ENCODE measurements at regions of chr21 and their contacts with region 1.

Region 1: DNA sequence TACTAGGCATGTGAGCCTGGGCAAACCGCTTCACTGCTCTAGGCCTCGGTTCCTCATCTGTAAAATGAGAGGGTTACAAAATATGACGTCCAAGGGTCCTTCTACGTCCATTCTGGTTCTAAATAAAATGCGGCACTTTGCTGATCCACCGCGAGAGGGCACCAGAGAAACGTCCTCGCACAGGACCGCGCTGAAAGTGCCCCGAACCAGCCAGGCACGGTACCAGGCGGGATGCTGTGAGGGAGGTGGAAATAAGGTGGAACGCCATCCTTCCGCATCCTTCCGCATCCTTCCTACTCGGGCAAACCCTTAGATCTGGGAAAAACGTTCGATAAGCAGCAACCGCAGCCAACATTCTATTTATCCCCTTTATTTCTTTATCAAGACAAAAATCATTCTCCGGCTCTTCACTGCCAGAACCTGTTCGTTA is 60.3 kb upstream of the KRTAP19-8 start:
- DNase-seq: peak; percentile 66 to 86 (median 78)
- H3K4me3 ChIP-seq: no peak overlapping the region
- H3K27ac ChIP-seq: peak overlapping the region in 7 of 59 donors; percentile 7 to 68 (median 28)
- H3K27me3 ChIP-seq: no peaks in the 10 kb centered on the region
- CTCF ChIP-seq: peak; percentile 63 to 92 (median 85)

Region 2: DNA sequence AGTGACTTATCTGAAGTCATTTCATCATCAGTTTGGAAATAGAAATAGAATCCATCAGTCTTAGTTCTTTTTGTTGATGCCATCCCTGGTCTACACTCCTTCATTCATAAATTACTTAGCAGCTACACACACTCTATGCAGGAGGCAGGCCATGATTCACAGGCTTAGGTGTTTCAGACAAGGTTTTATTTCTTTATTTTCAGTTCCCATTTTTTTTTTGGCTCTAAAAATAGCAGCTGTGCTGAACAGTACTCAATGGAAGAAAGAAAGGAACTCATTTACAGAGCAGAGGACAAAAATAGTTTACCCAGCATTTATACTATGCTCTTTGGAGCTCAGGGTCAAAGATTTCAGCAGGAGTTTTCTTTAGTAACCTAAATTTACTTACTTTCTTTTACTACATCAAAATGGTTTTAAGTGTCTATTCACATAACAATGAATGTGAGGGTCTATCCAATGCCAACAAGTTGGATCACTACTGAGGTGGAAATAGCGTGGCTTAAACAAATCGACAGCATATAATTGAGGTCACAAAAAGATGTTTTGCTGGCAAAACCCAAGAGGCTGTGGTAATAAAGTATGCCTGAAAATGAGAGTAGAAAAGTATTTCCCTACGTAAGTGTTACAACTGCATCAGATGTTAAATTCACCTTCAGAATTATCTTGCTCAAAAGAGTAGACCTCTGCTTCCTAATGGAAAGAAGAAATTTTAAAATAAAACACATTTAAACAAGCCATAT is 68.1 kb before region 1 on chr21:
- intact Hi-C with region 1: no loop called
- DNase-seq: no peak
- H3K4me3 ChIP-seq: no peak overlapping the region
- H3K27ac ChIP-seq: no peak overlapping the region
- H3K27me3 ChIP-seq: no peaks in the 10 kb centered on the region
- CTCF ChIP-seq: no peak

Region 3: DNA sequence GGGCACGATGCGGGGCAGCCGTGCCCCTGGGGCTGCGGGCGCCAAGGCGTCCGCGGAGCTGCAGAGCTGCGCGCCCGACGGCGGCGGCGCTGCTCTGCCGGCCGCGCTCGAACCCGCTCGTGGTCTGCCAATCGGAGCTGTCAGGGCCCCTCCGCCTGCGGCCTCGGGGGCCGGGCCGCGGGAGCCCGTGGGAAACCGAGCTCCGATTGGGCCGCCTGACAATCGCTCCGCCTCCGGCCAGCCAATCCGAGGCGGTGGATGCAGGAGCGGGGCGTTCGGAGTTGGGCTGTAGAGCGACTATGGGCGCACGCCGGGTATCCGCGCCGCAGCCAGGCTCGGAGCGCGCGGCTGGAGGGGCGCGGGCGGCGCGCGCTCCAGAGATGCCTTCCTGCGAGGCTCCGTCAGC is 460.4 kb after region 1 on chr21:
- intact Hi-C with region 1: loop called in 1 of 2 experiments (anchors 10 kb)
- DNase-seq: peak; percentile 90 to 99 (median 94)
- H3K4me3 ChIP-seq: peak overlapping the region; percentile 60 to 92 (median 79)
- H3K27ac ChIP-seq: peak overlapping the region in 42 of 59 donors; percentile 14 to 90 (median 70)
- H3K27me3 ChIP-seq: peaks cover 0 to 9% (median 0%) of the 10 kb centered on the region in 45 donors
- CTCF ChIP-seq: peak in 50 of 56 donors; percentile 6 to 74 (median 48)

Region 4: GRCh38 chr21:31580866-31581276 is 482.3 kb after region 1 on chr21:
- intact Hi-C with region 1: loop called in 1 of 2 experiments (anchors 2 kb)
- DNase-seq: peak; percentile 57 to 86 (median 66)
- H3K4me3 ChIP-seq: no peak overlapping the region
- H3K27ac ChIP-seq: no peak overlapping the region
- H3K27me3 ChIP-seq: no peaks in the 10 kb centered on the region
- CTCF ChIP-seq: peak; percentile 59 to 94 (median 85)